ENCODE measurements at regions of chr3 and their contacts with region 1.

Region 1: GRCh38 chr3:27484015-27484844 is at the start of gene SLC4A7:
- DNase-seq: peak; percentile 98
- ATAC-seq: peak; percentile 91
- H3K4me3 ChIP-seq: peak within 1 kb of the TSS; percentile 65 to 99 (median 81)
- H3K4me3 Mint-ChIP-seq: peak within 1 kb of the TSS; percentile 100
- H3K27ac ChIP-seq: peak within 1 kb of the TSS; percentile 64 to 90
- H3K27ac Mint-ChIP-seq: peak within 1 kb of the TSS; percentile 99
- H3K4me1 ChIP-seq: peaks cover 35 to 44% of the 10 kb centered on the region in 2 donors
- H3K4me1 Mint-ChIP-seq: peaks cover 38% of the 10 kb centered on the region
- H3K27me3 ChIP-seq: no peaks in the 10 kb centered on the region
- H3K27me3 Mint-ChIP-seq: no peaks in the 10 kb centered on the region
- CTCF ChIP-seq: no peak
- total RNA-seq, gene SLC4A7: 46.9 and 49.6 TPM in 2 replicates

Region 2: DNA sequence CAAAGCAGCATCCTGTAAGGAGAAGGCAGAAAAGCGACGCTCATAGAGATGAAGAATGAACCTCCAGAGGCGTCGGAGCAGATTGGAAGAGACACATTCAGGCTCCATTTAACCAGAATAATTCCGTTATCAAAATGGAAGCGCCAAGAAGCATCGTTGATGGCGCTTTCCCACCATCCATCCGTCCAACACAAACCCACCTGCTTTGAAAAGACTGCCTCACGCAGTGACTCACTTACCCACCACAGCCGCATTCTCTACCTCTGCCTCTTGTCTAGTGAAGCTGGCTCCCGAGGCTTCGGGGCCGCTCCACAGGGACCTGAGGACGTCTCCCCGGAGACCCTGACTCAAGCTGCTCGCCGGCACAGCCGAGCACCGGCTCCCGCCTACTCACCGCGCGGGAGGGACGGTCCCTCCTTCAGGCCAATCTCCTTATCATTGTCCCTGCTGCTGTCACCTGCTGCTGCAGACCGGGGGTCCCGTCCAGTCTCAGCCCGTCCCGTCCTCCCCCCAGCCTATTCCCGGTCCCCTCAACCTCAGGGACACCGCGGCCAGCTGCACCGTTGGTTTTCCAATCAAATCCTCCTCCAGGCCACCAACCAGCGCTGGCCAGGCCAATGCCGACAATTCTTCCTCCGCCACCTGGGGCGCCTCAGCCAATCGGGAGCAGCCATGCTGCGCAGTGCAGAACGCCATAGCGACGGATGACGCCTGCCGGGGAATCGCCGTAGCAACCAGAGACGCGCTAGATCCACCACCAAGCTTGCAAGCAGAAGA is 115.2 kb before region 1 on chr3 and contains the start of gene NEK10:
- CTCF ChIA-PET with region 1: no interaction called
- POLR2A ChIA-PET with region 1: no interaction called
- intact Hi-C with region 1: loop called (anchors 1 kb)
- DNase-seq: peak; percentile 92
- ATAC-seq: peak; percentile 98
- H3K4me3 ChIP-seq: peak within 1 kb of the TSS; percentile 52 to 69 (median 61)
- H3K4me3 Mint-ChIP-seq: peak within 1 kb of the TSS; percentile 94
- H3K27ac ChIP-seq: no peak within 1 kb of the TSS
- H3K27ac Mint-ChIP-seq: peak within 1 kb of the TSS; percentile 78
- H3K4me1 ChIP-seq: peaks cover 7 to 14% of the 10 kb centered on the region in 2 donors
- H3K4me1 Mint-ChIP-seq: peaks cover 17% of the 10 kb centered on the region
- H3K27me3 ChIP-seq: no peaks in the 10 kb centered on the region
- H3K27me3 Mint-ChIP-seq: peaks cover 3% of the 10 kb centered on the region
- CTCF ChIP-seq: no peak
- total RNA-seq, gene NEK10: 0.36 and 0.49 TPM in 2 replicates

Region 3: DNA sequence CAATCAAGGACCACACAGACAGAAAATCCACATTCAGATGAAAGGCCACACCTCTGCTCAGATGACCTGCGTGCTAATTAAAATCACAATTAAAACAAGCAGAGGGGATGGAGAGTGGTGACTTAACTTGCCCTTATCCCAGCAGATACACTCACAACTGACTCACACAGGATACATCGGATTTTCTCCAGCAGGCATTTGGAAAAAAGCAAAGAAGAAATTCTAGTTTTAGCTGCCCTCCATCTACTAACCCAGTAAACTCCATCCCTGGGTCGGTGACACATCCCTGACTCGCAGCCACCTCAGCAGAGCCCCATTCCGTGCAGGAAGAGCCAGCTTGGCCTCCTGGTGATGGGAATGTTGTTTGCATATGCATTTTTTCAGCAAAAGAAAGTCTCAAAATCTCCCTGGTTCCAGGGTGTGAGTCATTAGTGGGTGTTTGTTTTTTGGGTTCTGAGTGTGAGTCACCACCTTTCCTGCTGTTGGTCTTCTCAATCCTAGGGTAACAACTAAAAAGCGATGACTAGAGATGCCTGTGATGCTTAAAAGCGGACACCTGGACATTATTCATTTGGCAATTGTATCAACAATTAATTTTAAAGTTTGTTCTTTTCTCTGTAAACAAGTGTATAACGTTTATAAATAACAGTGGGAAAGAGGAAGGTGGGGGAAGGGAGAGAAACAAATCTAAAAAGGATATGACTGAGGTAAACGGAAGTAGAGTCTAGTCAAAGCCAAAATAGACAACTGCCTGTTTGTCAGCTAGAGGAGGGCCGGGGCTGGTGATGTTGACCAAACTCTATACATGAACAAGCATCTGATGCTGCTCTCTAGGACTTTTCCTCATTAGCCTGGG is 49.7 kb after region 1 on chr3:
- CTCF ChIA-PET with region 1: no interaction called
- POLR2A ChIA-PET with region 1: no interaction called
- intact Hi-C with region 1: no loop called
- DNase-seq: peak; percentile 34
- ATAC-seq: peak; percentile 70
- H3K4me3 ChIP-seq: no peak overlapping the region
- H3K4me3 Mint-ChIP-seq: peak overlapping the region; percentile 71
- H3K27ac ChIP-seq: peak overlapping the region; percentile 12 to 41
- H3K27ac Mint-ChIP-seq: peak overlapping the region; percentile 92
- H3K4me1 ChIP-seq: peaks cover 10 to 17% of the 10 kb centered on the region in 2 donors
- H3K4me1 Mint-ChIP-seq: peaks cover 20% of the 10 kb centered on the region
- H3K27me3 ChIP-seq: no peaks in the 10 kb centered on the region
- H3K27me3 Mint-ChIP-seq: no peaks in the 10 kb centered on the region
- CTCF ChIP-seq: no peak

Region 4: GRCh38 chr3:27632431-27633223 is 148.4 kb after region 1 on chr3:
- CTCF ChIA-PET with region 1: no interaction called
- POLR2A ChIA-PET with region 1: no interaction called
- intact Hi-C with region 1: loop called (anchors 2 kb)
- DNase-seq: peak; percentile 67
- ATAC-seq: peak; percentile 84
- H3K4me3 ChIP-seq: peak overlapping the region; percentile 41 to 63 (median 56)
- H3K4me3 Mint-ChIP-seq: peak overlapping the region; percentile 95
- H3K27ac ChIP-seq: peak overlapping the region; percentile 0 to 35
- H3K27ac Mint-ChIP-seq: peak overlapping the region; percentile 86
- H3K4me1 ChIP-seq: peaks cover 5 to 10% of the 10 kb centered on the region in 2 donors
- H3K4me1 Mint-ChIP-seq: peaks cover 16% of the 10 kb centered on the region
- H3K27me3 ChIP-seq: no peaks in the 10 kb centered on the region
- H3K27me3 Mint-ChIP-seq: no peaks in the 10 kb centered on the region
- CTCF ChIP-seq: no peak

Region 5: DNA sequence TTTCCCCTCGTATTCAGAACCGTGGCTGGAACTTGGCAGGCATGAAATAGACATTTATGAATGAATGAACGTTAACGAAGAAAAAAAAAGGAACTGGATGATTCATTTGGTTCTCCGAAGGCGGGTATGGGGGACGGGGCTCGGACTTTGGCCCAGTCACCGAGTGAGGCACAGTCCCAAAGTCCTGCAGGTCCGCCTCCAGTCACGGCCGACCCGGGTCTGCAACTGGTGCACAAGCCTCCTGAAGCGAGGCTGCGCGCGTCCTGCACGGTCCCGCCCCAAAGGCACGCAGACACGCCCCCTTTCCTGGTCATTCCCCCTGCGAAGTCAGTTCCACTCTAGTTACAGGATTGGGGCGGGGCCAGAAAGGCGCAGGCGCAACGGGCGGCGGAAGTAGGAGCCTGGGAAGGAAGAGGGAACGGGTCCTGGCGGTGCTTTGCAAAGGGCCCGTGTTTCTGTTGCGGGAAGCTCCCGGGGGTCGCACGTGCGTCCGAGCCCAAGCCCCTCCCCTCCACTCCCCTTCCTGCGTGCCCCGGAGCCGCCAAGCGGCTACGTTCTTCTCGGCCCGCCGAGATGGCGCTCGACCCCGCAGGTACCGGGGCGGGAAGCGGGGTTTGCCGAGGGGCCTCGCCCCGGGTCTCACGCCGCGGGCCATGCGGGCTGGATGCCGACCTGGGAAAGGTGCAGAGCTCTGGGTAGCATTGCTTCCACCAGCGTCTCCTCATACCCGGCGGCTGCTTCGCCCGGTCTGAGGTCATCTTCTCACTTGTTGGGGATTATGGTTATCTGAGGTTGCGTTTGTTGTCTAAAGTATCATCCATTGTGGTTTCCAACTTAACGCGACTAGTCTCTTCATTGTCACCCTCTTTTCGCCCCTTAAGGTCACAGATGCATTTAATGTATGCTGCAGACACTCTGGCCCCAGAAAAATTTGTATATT is 757.3 kb after region 1 on chr3 and contains the start of gene CMC1:
- CTCF ChIA-PET with region 1: no interaction called
- POLR2A ChIA-PET with region 1: no interaction called
- intact Hi-C with region 1: loop called (anchors 1 kb)
- DNase-seq: peak; percentile 87
- ATAC-seq: peak; percentile 95
- H3K4me3 ChIP-seq: peak within 1 kb of the TSS; percentile 71 to 88 (median 81)
- H3K4me3 Mint-ChIP-seq: peak within 1 kb of the TSS; percentile 98
- H3K27ac ChIP-seq: peak within 1 kb of the TSS; percentile 35 to 62
- H3K27ac Mint-ChIP-seq: peak within 1 kb of the TSS; percentile 96
- H3K4me1 ChIP-seq: peaks cover 17 to 22% of the 10 kb centered on the region in 2 donors
- H3K4me1 Mint-ChIP-seq: peaks cover 41% of the 10 kb centered on the region
- H3K27me3 ChIP-seq: no peaks in the 10 kb centered on the region
- H3K27me3 Mint-ChIP-seq: no peaks in the 10 kb centered on the region
- CTCF ChIP-seq: no peak
- total RNA-seq, gene CMC1: 14.5 and 16.7 TPM in 2 replicates